OCI-LY7 (cell line): ENCODE measurements at regions of chr18 and their contacts with region 1.

Region 1: DNA sequence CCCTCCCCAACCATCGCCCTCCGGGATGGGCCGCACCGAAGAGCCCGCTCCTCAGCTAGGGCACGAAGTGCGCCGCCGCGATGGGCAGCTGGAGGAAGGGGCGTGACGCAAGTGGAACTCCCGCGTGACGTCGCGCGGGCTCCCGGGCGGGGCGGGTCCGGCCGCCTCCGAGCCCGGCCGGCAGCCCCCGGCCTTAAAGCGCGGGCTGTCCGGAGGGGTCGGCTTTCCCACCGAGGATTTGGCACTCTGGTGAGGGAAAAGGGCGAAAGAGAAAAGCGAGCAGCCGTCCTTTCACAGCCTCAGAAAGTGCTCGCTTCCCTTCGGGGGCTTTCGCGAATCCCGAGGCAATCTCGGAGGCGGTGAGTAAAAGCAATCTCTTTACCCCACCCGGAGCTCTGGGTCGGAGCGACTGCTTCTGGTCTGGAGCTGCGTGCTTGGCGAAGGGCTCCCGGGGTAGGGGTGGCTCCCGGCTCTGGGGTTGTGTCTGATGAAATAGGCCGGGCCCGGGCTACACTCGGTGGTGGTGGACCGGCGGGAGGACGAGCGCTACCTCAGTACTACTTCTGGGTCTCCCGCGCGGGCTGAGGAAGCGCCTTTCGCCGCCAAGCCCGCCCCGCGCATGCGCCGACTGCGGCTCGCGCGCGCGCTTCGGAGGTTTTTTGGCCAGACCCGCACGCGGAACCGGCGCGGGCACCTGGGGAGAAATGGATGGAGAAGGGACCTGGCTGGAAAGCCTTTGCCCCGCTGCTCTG is at the start of gene RBBP8:
- DNase-seq: peak; percentile 91
- H3K4me3 ChIP-seq: peak within 1 kb of the TSS; percentile 77
- H3K27ac ChIP-seq: peak within 1 kb of the TSS; percentile 88
- H3K4me1 ChIP-seq: peaks cover 37% of the 10 kb centered on the region
- CTCF ChIP-seq: no peak
- total RNA-seq, gene RBBP8: 51.0 and 57.8 TPM in 2 replicates

Region 2: GRCh38 chr18:22197668-22198067 is 735.7 kb before region 1 on chr18:
- CTCF ChIA-PET with region 1: no interaction called
- POLR2A ChIA-PET with region 1: interaction called, 10 read pairs
- intact Hi-C with region 1: no loop called
- DNase-seq: no peak
- H3K4me3 ChIP-seq: no peak overlapping the region
- H3K27ac ChIP-seq: no peak overlapping the region
- H3K4me1 ChIP-seq: no peaks in the 10 kb centered on the region
- CTCF ChIP-seq: no peak

Region 3: GRCh38 chr18:22734776-22735627 is 198.4 kb before region 1 on chr18:
- CTCF ChIA-PET with region 1: no interaction called
- POLR2A ChIA-PET with region 1: no interaction called
- intact Hi-C with region 1: no loop called
- DNase-seq: no peak
- H3K4me3 ChIP-seq: no peak overlapping the region
- H3K27ac ChIP-seq: no peak overlapping the region
- H3K4me1 ChIP-seq: no peaks in the 10 kb centered on the region
- CTCF ChIP-seq: no peak

Region 4: DNA sequence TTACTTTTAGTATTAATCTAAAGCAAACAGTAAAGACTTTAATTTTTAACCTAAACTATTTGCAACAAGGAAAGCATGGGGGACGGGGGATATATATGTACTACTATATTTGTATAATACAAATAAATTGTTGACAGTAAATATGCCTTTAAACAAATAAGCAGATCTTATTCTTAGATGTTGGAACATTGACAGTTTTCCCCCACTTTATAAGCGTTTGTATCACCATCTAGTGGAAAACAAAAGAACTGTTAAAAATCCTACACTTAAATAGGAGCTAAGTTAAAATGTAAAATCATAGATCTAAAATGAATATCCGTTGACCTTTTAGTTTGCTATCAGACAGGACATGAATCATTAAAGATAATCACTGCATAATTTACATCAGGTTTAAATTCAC is 49.8 kb after region 1 on chr18:
- CTCF ChIA-PET with region 1: interaction called, 3 read pairs
- POLR2A ChIA-PET with region 1: interaction called, 5 read pairs
- intact Hi-C with region 1: loop called (anchors 2 kb)
- DNase-seq: peak; percentile 40
- H3K4me3 ChIP-seq: no peak overlapping the region
- H3K27ac ChIP-seq: no peak overlapping the region
- H3K4me1 ChIP-seq: peaks cover 6% of the 10 kb centered on the region
- CTCF ChIP-seq: peak; percentile 81

Region 5: GRCh38 chr18:23231340-23232021 is 298.1 kb after region 1 on chr18:
- CTCF ChIA-PET with region 1: no interaction called
- POLR2A ChIA-PET with region 1: no interaction called
- intact Hi-C with region 1: loop called (anchors 5 kb)
- DNase-seq: peak; percentile 92
- H3K4me3 ChIP-seq: peak overlapping the region; percentile 5
- H3K27ac ChIP-seq: peak overlapping the region; percentile 100
- H3K4me1 ChIP-seq: peaks cover 80% of the 10 kb centered on the region
- CTCF ChIP-seq: no peak

Region 6: GRCh38 chr18:23503038-23503962 is 569.9 kb after region 1 on chr18 and contains the start of gene RMC1:
- CTCF ChIA-PET with region 1: no interaction called
- POLR2A ChIA-PET with region 1: no interaction called
- intact Hi-C with region 1: loop called (anchors 5 kb)
- DNase-seq: peak; percentile 96
- H3K4me3 ChIP-seq: peak within 1 kb of the TSS; percentile 96
- H3K27ac ChIP-seq: peak within 1 kb of the TSS; percentile 72
- H3K4me1 ChIP-seq: peaks cover 40% of the 10 kb centered on the region
- CTCF ChIP-seq: peak; percentile 58
- total RNA-seq, gene RMC1: 28.4 and 32.8 TPM in 2 replicates

Region 7: DNA sequence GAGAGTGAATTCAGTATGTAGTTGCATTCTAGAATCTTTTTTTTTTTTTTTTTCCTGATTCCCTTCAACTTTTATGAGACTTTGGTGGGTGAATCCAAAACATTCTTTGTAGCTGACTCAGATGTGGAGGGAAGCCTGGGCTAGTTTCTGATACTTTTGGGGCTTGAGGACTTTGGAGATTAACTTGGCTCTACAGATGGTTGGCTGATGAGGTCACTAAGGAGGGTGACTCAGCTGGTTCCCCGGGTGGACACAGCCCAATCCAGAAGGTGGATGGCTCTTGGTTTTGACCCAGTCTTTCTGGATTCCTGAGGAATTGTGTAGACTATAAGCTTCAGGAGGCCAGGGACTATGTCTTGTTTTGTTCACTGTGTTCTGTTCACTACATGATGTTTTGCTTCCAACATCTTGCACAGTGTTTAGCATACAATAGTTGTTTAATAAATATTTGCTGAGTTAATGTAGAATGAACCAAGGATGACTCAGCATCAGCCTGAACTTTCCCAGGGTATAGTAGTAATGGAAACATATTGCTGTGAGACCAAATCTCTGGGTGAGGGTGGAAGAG is 786.3 kb after region 1 on chr18:
- CTCF ChIA-PET with region 1: no interaction called
- POLR2A ChIA-PET with region 1: no interaction called
- intact Hi-C with region 1: no loop called
- DNase-seq: no peak
- H3K4me3 ChIP-seq: no peak overlapping the region
- H3K27ac ChIP-seq: no peak overlapping the region
- H3K4me1 ChIP-seq: no peaks in the 10 kb centered on the region
- CTCF ChIP-seq: no peak